PC-3 (cell line): ENCODE measurements at regions of chr12 and their contacts with region 1.

Region 1: GRCh38 chr12:106774005-106774807 is at the start of gene RIC8B:
- DNase-seq: peak; percentile 99
- ATAC-seq: peak; percentile 94
- H3K4me3 ChIP-seq: peak within 1 kb of the TSS; percentile 88
- H3K27ac ChIP-seq: peak within 1 kb of the TSS; percentile 85
- H3K4me1 ChIP-seq: peaks cover 16% of the 10 kb centered on the region
- H3K27me3 ChIP-seq: peaks cover 3% of the 10 kb centered on the region
- CTCF ChIP-seq: no peak
- total RNA-seq, gene RIC8B: 8.6 and 8.8 TPM in 2 replicates

Region 2: GRCh38 chr12:105401198-105401597 is 1373.0 kb before region 1 on chr12:
- CTCF ChIA-PET with region 1: no interaction called
- POLR2A ChIA-PET with region 1: no interaction called
- intact Hi-C with region 1: loop called (anchors 5 kb)
- DNase-seq: peak; percentile 61
- ATAC-seq: peak; percentile 97
- H3K4me3 ChIP-seq: no peak overlapping the region
- H3K27ac ChIP-seq: peak overlapping the region; percentile 35
- H3K4me1 ChIP-seq: peaks cover 18% of the 10 kb centered on the region
- H3K27me3 ChIP-seq: no peaks in the 10 kb centered on the region
- CTCF ChIP-seq: no peak

Region 3: DNA sequence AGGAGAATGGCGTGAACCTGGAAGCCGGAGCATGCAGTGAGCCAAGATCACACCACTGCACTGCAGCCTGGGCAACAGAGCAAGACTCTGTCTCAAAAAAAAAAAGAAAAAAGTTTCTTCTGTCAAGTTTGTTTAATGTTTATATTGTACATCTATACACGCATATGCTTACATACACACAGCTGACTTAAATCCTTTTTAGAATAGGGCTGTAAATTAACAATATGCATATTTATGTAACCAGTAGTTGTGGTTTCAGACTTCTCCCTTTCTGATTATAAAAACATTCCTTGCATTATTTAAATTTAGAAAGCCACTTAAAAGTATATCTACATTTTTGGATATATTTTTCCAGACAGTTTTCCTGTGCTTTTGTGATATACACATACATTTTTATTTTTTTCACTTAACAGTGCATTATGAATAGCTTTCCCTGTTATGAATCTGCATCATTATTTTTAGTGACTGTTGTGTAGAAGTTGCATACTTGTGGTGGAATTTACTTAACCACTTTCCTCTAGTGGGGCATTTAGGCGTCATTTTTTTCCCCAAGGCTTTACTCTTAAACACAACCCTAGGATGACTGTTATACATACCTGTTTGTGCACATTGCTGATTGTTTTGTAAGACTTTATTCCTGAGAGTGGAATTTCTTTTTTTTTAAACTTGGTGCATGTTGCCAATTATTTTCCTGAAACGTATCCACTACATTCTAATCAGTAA is 387.2 kb before region 1 on chr12:
- CTCF ChIA-PET with region 1: no interaction called
- POLR2A ChIA-PET with region 1: no interaction called
- intact Hi-C with region 1: loop called (anchors 5 kb)
- DNase-seq: no peak
- ATAC-seq: no peak
- H3K4me3 ChIP-seq: no peak overlapping the region
- H3K27ac ChIP-seq: no peak overlapping the region
- H3K4me1 ChIP-seq: no peaks in the 10 kb centered on the region
- H3K27me3 ChIP-seq: no peaks in the 10 kb centered on the region
- CTCF ChIP-seq: no peak

Region 4: DNA sequence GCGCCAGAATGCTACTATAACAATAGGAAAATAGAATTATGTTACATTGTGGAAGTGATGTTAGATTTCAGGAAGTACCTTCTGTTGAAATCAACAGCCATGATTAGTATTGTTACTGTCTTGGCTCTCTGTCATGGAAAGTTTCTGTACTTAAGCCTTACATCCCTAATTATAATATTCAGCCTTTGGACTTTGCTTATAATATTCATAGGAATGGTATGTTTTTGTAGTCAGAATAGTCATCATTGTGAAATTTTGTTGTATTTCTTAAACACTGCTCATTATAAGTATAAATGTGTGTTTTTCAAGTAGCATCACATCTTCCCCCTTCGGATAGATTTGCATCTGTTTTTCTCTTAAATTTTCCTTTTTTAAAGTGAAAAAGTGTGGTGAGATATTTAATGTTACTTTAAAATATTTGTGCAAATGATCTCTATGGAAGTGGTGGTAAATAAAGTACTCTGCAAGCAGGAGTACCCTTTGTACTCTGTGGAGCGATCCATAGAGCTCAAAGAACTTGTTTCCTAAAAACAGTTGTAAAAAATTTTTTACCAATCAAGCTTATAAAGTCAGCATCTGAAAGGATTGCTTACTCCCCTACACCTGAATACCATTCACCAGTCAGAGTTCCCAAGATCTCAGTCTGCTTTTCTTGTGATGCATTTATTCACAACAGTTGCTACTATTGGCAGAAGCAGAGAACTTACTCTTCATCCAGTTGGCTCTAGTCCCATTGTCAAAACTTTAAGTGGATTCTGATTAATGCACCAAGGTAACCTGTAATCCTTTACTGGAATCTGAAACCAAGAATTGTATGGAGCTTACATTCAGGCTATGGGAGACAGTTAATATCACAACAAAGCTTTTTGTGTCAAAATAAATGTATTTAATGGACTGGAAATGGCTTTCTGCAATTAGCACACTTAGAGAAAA is 88.0 kb after region 1 on chr12:
- CTCF ChIA-PET with region 1: no interaction called
- POLR2A ChIA-PET with region 1: no interaction called
- intact Hi-C with region 1: loop called (anchors 1 kb)
- DNase-seq: peak; percentile 82
- ATAC-seq: peak; percentile 89
- H3K4me3 ChIP-seq: peak overlapping the region; percentile 16
- H3K27ac ChIP-seq: peak overlapping the region; percentile 46
- H3K4me1 ChIP-seq: peaks cover 23% of the 10 kb centered on the region
- H3K27me3 ChIP-seq: no peaks in the 10 kb centered on the region
- CTCF ChIP-seq: no peak

Region 5: GRCh38 chr12:106873983-106874382 is 99.8 kb after region 1 on chr12:
- CTCF ChIA-PET with region 1: no interaction called
- POLR2A ChIA-PET with region 1: no interaction called
- intact Hi-C with region 1: no loop called
- DNase-seq: no peak
- ATAC-seq: no peak
- H3K4me3 ChIP-seq: no peak overlapping the region
- H3K27ac ChIP-seq: no peak overlapping the region
- H3K4me1 ChIP-seq: peaks cover 13% of the 10 kb centered on the region
- H3K27me3 ChIP-seq: no peaks in the 10 kb centered on the region
- CTCF ChIP-seq: no peak

Region 6: DNA sequence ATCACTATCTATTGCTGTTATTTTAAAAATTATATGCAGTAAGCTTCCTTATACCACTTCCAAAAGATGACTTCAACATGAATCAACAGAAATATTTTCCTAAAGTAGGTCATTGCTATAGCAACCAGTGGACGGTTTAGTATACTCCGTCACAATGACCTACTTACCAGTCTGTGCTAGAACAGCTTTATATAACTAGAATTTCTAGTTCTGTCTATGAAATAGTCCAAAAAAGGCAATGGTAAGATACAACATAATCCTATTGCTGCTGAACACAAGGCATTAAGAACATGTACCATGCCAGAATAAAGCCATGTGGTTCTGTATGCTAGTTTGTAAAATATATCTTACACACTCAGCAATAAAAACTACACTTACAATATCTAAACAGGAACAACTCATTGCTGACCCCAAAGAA is 253.4 kb after region 1 on chr12:
- CTCF ChIA-PET with region 1: no interaction called
- POLR2A ChIA-PET with region 1: no interaction called
- intact Hi-C with region 1: loop called (anchors 1 kb)
- DNase-seq: peak; percentile 98
- ATAC-seq: peak; percentile 97
- H3K4me3 ChIP-seq: no peak overlapping the region
- H3K27ac ChIP-seq: peak overlapping the region; percentile 52
- H3K4me1 ChIP-seq: peaks cover 29% of the 10 kb centered on the region
- H3K27me3 ChIP-seq: no peaks in the 10 kb centered on the region
- CTCF ChIP-seq: no peak